ENCODE measurements at regions of chr9 and their contacts with region 1.

Region 1: DNA sequence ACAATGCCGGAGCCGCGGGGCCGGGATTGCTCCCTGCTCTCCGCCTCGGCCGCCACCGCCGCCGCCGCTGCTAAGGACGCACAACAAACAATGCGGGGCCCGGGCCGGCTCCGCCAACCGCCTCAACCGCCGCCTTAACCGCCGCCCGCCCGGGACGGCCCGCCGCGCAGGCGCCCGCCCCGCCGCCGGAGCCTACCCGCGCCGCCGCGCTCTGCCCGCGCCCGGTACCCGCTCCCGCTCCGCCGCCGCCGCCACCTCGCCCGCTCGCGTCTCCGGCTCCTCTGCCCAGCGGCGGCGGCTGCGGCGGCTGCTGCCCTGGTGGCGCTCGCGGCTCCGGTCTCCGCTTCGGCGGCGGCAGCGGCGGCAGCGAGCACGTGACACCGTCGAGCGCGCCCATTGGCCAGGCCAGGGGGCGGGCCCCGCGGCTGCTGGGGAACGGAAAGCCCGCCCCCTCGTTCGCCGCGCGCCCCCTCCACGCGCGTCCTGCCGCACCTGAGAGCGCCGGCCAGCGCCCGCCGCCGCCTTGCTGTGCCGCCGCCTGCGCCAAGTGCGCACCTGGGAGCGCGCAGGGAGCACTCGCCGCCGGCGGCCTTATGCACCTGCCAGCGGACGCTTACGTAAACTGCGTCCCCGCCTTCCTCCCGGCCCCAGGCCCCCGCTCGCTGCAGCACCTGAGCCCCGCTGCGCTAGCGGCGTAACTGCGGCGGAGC is at the start of gene STRBP:
- H3K4me3 Mint-ChIP-seq: peak within 1 kb of the TSS; percentile 76
- H3K27ac Mint-ChIP-seq: no peak within 1 kb of the TSS
- H3K4me1 Mint-ChIP-seq: peaks cover 18% of the 10 kb centered on the region
- H3K27me3 Mint-ChIP-seq: peaks cover 37% of the 10 kb centered on the region

Region 2: GRCh38 chr9:123091459-123091858 is 176.9 kb before region 1 on chr9:
- intact Hi-C with region 1: no loop called
- H3K4me3 Mint-ChIP-seq: no peak overlapping the region
- H3K27ac Mint-ChIP-seq: no peak overlapping the region
- H3K4me1 Mint-ChIP-seq: no peaks in the 10 kb centered on the region
- H3K27me3 Mint-ChIP-seq: no peaks in the 10 kb centered on the region

Region 3: GRCh38 chr9:123225374-123225813 is 43.0 kb before region 1 on chr9:
- intact Hi-C with region 1: no loop called
- H3K4me3 Mint-ChIP-seq: no peak overlapping the region
- H3K27ac Mint-ChIP-seq: no peak overlapping the region
- H3K4me1 Mint-ChIP-seq: no peaks in the 10 kb centered on the region
- H3K27me3 Mint-ChIP-seq: no peaks in the 10 kb centered on the region

Region 4: GRCh38 chr9:123338710-123339665 is 70.6 kb after region 1 on chr9:
- intact Hi-C with region 1: loop called (anchors 5 kb)
- H3K4me3 Mint-ChIP-seq: peak overlapping the region; percentile 47
- H3K27ac Mint-ChIP-seq: peak overlapping the region; percentile 25
- H3K4me1 Mint-ChIP-seq: peaks cover 51% of the 10 kb centered on the region
- H3K27me3 Mint-ChIP-seq: peaks cover 26% of the 10 kb centered on the region

Region 5: DNA sequence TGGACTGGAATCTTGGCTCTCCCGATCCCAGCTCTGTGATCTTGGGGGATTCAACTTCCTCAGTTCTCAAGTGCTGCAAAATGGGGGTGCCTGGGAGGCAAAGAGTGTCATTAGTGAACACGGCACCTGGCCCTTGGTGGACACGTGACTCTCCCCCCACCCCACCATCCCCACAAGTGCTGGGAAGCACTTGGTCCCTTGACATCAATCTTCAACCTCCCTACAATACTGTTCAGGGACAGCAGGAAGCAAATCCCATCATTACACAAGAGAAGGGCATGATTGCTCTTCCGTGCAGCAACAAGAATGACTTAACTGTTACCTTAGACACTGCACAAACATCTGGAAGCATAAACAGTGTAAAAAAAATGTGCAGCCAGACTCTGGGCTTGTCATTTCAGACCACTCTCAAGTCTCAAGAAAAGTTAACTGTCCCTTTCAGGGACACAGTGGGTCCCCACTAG is 1085.4 kb after region 1 on chr9:
- intact Hi-C with region 1: no loop called
- H3K4me3 Mint-ChIP-seq: no peak overlapping the region
- H3K27ac Mint-ChIP-seq: no peak overlapping the region
- H3K4me1 Mint-ChIP-seq: peaks cover 47% of the 10 kb centered on the region
- H3K27me3 Mint-ChIP-seq: no peaks in the 10 kb centered on the region

Measured in dendritic cell treated with granulocyte-macrophage colony-stimulating factor and Interleukin-4, amounts not matched to agents 40 ng/mL and 50 ng/mL, for 4 days (primary cell).